Activated CD8-positive, alpha-beta memory T cell treated with anti-CD3 and anti-CD28 coated beads, Interleukin-2, amount 10 ng/mL, durations not matched to agents 7 days and 5 days (primary cell): ENCODE measurements at regions of chr11 and their contacts with region 1.

Region 1: DNA sequence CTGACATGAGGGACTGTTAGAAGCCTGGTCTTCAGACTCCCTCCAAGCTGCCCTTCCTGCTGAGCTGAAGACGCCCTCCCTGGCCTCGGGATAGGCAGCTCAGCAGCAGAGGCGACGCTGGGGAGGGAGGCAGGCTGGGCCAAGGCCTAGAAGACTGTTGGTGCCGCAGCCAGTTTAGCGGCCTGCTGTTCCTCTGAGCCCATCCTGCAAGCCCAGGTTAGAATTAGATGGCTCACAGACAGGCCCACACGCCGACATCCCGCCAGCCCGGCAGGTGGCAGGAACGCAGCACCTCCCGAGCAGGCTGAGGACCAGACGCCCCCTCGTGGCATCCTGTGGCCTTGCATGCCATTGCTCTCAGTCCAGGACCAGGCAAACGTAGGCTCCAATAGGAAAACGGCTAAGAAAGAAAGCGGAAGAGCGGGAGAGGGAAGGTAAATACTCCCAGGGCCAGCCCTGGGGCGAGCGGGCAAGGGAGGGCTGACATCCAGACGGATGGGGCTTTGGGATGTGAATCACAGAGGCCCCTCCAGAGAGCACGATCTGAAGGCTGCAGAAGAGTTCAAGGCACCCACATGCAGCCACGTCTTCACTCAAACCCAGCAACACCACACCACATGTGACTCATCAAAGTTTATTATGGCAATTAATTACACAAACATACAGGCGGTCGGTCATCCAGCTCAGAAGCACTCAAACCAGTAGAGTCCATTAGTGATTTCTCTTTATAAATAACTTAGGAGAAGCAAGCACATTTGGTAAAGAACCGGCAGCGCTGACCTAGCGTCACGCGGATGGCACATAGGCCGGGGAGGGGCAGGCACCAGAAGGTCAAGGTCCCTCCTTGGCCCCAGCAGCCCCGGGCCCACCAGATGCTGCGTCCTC is 27.6 kb downstream of the CD5 start:
- DNase-seq: peak; percentile 93
- ATAC-seq: peak; percentile 95
- H3K4me3 Mint-ChIP-seq: peak overlapping the region; percentile 29
- H3K27ac Mint-ChIP-seq: peak overlapping the region; percentile 13
- H3K4me1 Mint-ChIP-seq: peaks cover 11% of the 10 kb centered on the region
- H3K27me3 Mint-ChIP-seq: no peaks in the 10 kb centered on the region

Region 2: GRCh38 chr11:60813324-60813723 is 316.6 kb before region 1 on chr11:
- CTCF ChIA-PET with region 1: no interaction called
- DNase-seq: no peak
- ATAC-seq: no peak
- H3K4me3 Mint-ChIP-seq: no peak overlapping the region
- H3K27ac Mint-ChIP-seq: no peak overlapping the region
- H3K4me1 Mint-ChIP-seq: no peaks in the 10 kb centered on the region
- H3K27me3 Mint-ChIP-seq: peaks cover 3% of the 10 kb centered on the region

Region 3: GRCh38 chr11:60913793-60914632 is 215.9 kb before region 1 on chr11 and contains the start of gene TMEM109:
- CTCF ChIA-PET with region 1: interaction called, 13 read pairs
- DNase-seq: peak; percentile 93
- ATAC-seq: peak; percentile 77
- H3K4me3 Mint-ChIP-seq: peak within 1 kb of the TSS; percentile 94
- H3K27ac Mint-ChIP-seq: peak within 1 kb of the TSS; percentile 98
- H3K4me1 Mint-ChIP-seq: peaks cover 36% of the 10 kb centered on the region
- H3K27me3 Mint-ChIP-seq: peaks cover 11% of the 10 kb centered on the region
- total RNA-seq, gene TMEM109: 106 to 121 TPM

Region 4: GRCh38 chr11:61111786-61112517 is 17.9 kb before region 1 on chr11:
- CTCF ChIA-PET with region 1: interaction called, 45 read pairs
- DNase-seq: peak; percentile 91
- ATAC-seq: peak; percentile 95
- H3K4me3 Mint-ChIP-seq: peak overlapping the region; percentile 62
- H3K27ac Mint-ChIP-seq: peak overlapping the region; percentile 79
- H3K4me1 Mint-ChIP-seq: peaks cover 88% of the 10 kb centered on the region
- H3K27me3 Mint-ChIP-seq: no peaks in the 10 kb centered on the region

Region 5: DNA sequence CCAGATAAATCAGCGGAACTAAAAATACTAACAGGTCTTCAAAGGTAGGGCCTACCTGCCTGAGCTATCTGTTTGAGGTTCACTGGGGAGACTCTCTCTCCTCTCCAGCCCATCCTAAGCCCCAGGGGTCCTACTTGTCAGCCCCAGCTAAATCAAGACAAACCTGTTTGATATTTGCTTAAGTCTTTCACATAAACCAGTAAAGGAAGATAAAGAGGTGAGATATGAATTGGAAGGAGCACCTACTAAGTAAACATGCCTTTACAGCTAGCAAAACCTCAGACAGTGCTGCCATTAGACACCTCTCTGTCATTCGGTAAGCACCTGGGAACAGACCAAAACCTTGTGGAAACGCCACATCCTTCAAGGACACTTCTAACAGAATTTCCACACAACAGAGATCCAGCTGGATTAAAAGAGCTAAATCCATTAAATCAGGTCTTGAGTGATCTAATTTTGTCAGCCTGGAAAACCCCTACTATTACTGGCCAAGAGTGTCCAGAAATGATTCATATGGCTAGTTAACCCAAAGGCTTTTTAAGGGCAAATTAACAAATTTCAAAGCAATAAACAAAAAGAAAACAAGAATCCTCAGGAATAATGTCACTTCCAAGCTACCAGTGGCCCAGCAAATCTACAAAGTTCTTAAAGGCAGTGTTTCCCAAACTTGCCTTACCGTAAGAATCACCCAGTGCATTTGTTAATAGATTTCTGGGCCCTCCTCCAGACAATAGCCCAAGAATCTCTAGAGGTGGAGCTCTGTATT is 28.9 kb after region 1 on chr11:
- CTCF ChIA-PET with region 1: interaction called, 13 read pairs
- DNase-seq: no peak
- ATAC-seq: no peak
- H3K4me3 Mint-ChIP-seq: no peak overlapping the region
- H3K27ac Mint-ChIP-seq: no peak overlapping the region
- H3K4me1 Mint-ChIP-seq: peaks cover 41% of the 10 kb centered on the region
- H3K27me3 Mint-ChIP-seq: no peaks in the 10 kb centered on the region

Region 6: GRCh38 chr11:61187505-61188130 is 57.7 kb after region 1 on chr11:
- CTCF ChIA-PET with region 1: interaction called, 10 read pairs
- DNase-seq: peak; percentile 84
- ATAC-seq: peak; percentile 95
- H3K4me3 Mint-ChIP-seq: no peak overlapping the region
- H3K27ac Mint-ChIP-seq: no peak overlapping the region
- H3K4me1 Mint-ChIP-seq: peaks cover 2% of the 10 kb centered on the region
- H3K27me3 Mint-ChIP-seq: peaks cover 10% of the 10 kb centered on the region